Activated CD8-positive, alpha-beta memory T cell treated with anti-CD3 and anti-CD28 coated beads, Interleukin-2, amount 10 ng/mL, durations not matched to agents 7 days and 5 days (primary cell): ENCODE measurements at regions of chr17 and their contacts with region 1.

Region 1: DNA sequence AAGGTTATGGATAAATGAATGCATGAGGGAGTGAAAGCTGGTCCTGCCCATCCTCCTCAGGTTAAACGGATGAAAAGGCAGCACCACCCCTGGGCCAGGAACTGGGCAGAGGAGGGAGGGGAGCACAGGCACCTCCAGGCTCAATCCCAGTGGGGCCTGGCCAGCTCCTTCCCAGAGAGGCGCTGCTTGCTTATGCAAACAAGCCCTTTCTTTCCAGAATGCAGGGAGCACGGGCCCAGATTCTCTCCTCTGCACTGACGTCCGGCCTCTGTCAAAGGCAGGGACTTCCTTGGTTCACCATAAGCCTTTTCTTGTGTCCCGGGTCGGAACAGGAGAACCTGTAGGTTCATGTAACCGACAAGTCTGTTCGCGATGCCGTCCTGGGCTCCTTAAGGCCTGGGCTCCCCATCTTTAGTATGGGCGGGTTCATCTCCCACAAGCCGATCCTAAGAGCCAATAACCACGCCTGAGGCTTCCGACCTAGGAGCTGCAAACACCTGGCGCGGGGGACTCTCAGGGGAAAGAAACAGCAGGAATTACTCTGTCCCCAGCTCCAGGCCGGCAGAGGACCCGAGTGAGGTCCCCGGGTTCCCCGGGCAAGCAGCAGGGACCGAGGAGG is 16.3 kb downstream of the ENPP7 start:
- DNase-seq: no peak
- ATAC-seq: no peak
- H3K4me3 Mint-ChIP-seq: no peak overlapping the region
- H3K27ac Mint-ChIP-seq: no peak overlapping the region
- H3K4me1 Mint-ChIP-seq: peaks cover 5% of the 10 kb centered on the region
- H3K27me3 Mint-ChIP-seq: peaks cover 55% of the 10 kb centered on the region

Region 2: GRCh38 chr17:79600681-79601131 is 146.3 kb before region 1 on chr17:
- CTCF ChIA-PET with region 1: no interaction called
- DNase-seq: no peak
- ATAC-seq: no peak
- H3K4me3 Mint-ChIP-seq: no peak overlapping the region
- H3K27ac Mint-ChIP-seq: no peak overlapping the region
- H3K4me1 Mint-ChIP-seq: no peaks in the 10 kb centered on the region
- H3K27me3 Mint-ChIP-seq: peaks cover 25% of the 10 kb centered on the region

Region 3: DNA sequence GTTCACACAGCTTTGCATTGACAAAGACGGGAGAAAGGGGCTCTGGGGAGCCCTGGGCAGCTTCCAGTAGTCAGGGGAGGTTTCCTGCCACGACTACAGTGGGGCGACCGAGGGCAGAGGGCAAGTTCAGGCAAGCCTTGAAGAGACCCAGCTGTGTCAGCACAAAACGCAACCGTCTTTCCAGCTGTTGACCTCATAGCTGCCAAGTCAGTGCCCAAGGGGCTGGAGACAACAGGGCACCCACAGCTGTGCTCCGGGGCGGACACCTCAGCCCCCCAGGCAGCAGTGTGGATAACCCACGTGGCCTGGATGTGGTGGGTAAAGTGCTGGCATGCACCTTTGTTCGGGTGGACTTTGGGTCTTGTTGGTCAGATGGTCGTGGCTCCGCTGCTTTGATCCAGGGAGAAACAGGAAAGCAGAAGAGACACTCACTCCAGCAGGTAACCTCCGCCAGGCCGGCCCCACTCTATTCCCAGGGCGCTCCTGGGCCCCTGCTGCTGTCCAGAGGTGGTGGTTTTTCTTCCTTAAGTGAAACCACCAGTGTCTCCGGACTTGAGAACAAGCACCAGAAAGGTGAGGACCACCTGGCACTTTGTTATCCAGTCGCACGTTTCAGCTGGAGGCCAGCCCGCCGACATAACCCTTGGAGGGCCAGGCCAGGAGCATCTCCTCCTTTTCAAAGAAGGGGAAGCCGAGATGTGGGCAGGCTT is 13.4 kb after region 1 on chr17:
- CTCF ChIA-PET with region 1: interaction called, 11 read pairs
- DNase-seq: no peak
- ATAC-seq: no peak
- H3K4me3 Mint-ChIP-seq: no peak overlapping the region
- H3K27ac Mint-ChIP-seq: no peak overlapping the region
- H3K4me1 Mint-ChIP-seq: peaks cover 1% of the 10 kb centered on the region
- H3K27me3 Mint-ChIP-seq: peaks cover 6% of the 10 kb centered on the region

Region 4: DNA sequence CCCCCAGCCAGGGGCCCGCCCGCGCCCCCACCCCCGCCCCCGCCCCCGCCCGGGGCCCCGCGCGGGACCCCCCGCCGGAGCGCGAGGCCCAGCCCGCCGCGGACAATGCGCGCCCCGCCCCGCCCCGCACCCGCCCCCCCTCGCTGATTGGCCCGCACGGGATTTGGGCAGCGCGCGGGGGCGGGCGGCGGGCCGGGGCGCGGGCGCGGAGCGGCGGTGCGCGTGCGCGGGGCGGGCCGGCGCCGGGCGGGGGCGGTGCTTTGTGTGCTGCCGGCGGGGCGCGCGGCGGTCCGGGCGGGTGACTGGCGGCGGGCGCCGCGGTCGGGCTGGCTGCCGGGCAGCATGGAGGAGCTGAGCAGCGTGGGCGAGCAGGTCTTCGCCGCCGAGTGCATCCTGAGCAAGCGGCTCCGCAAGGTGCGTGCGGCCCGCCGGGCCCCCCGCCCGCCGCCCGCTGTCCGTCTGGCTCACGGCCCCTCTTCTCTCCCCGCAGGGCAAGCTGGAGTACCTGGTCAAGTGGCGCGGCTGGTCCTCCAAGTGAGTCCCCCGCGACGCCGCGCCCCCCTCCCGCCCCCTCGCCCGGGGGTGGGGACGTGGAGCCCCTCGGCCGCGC is 31.0 kb after region 1 on chr17 and contains the start of gene CBX2:
- CTCF ChIA-PET with region 1: interaction called, 28 read pairs
- DNase-seq: peak; percentile 81
- ATAC-seq: peak; percentile 87
- H3K4me3 Mint-ChIP-seq: peak within 1 kb of the TSS; percentile 77
- H3K27ac Mint-ChIP-seq: peak within 1 kb of the TSS; percentile 47
- H3K4me1 Mint-ChIP-seq: peaks cover 12% of the 10 kb centered on the region
- H3K27me3 Mint-ChIP-seq: peaks cover 67% of the 10 kb centered on the region
- total RNA-seq, gene CBX2: 5.3 to 6.8 TPM